ENCODE measurements at regions of chr6 and their contacts with region 1.

Region 1: DNA sequence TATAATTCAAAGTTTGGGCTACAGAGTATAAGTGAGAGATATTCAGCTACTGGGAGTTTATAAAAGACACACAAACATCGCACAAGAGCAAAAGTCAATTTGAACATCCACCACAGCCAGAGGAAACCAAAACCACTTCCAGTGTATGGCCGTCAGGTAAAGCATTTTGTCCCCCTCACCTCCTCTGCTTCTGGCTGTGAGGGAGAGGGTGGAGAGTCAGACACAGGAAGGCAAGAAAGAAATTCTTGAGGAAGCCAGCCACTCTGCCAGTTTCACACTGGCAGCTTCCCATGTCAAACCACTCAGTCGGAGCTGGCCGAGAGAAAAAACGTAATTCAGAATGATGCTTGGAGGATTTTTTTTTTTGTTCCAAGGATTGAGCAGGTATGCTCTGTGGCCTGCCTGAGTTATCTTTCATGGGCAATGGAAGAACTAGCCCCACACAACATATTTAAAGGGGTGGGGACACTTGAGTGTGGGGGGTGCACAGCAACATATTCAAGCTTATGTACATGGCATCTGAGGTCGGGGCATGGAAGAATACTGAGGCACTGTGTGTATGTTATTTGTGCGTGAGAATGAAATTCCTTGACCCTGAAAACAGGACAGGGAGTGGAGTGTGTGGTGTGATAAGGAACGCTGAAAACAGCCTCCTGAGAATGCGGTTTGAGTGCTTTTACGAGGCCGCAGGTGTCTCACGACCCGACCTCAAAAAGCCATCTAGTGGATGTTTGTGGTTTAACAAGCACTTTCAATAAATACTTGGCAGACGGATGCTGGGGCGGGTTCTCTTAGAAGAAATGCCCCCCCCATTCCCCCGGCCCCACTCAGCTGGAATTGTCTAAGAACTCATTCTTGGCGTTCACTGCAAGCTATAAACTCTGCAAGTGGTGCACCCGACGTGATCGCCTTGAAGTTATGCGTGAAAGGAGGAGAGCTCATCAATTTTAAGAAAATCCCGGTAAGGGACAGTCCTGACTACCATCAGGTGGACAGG is 27.5 kb upstream of the ZBTB22 start:
- DNase-seq: peak; percentile 53 to 93 (median 62)
- ATAC-seq: peak; percentile 52
- H3K4me3 ChIP-seq: peak overlapping the region; percentile 24
- H3K4me3 Mint-ChIP-seq: peak overlapping the region; percentile 90
- H3K27ac ChIP-seq: peak overlapping the region; percentile 79 to 88
- H3K27ac Mint-ChIP-seq: peak overlapping the region; percentile 98
- H3K4me1 ChIP-seq: peaks cover 49% of the 10 kb centered on the region
- H3K4me1 Mint-ChIP-seq: peaks cover 38% of the 10 kb centered on the region
- H3K27me3 ChIP-seq: no peaks in the 10 kb centered on the region
- H3K27me3 Mint-ChIP-seq: no peaks in the 10 kb centered on the region
- CTCF ChIP-seq: peak; percentile 64

Region 2: DNA sequence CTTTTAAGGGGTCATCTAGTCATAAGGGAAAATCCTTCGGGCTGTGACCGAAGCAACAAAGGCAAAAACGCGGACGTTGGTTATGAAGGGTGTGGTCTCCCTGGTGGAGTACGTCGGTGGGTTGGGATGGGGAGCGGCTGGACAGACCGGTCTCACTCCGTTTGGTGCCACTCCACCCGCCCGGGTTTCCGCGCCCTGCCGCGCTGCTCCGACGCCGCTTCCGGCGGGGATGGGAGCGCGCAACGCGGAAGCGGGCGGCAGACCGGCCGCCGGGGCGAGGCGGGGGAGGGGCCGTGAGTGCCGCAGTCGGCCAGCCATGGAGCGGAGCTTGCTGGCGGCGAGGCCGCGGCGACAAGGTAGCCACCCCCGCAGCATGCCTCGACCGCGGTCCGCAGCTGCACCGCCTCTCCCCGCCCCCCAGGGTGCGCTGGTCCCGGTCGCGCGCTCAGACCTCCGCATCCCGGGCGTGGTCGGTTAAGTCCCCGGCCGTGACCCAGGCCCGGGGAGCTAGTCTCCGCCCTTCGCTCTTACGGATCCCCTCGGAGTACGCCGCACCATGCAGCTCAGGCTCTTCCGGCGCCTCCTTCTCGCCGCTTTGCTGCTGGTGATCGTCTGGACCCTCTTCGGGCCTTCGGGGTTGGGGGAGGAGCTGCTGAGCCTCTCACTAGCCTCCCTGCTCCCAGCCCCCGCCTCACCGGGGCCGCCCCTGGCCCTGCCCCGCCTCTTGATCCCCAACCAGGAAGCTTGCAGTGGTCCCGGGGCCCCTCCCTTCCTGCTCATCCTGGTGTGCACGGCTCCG is 67.9 kb before region 1 on chr6 and contains the start of gene B3GALT4:
- CTCF ChIA-PET with region 1: interaction called, 16 read pairs
- POLR2A ChIA-PET with region 1: interaction called, 57 read pairs
- intact Hi-C with region 1: no loop called
- DNase-seq: peak in 13 of 14 experiments; percentile 45 to 89 (median 64)
- ATAC-seq: peak; percentile 68
- H3K4me3 ChIP-seq: peak within 1 kb of the TSS; percentile 96
- H3K4me3 Mint-ChIP-seq: peak within 1 kb of the TSS; percentile 93
- H3K27ac ChIP-seq: peak within 1 kb of the TSS; percentile 82 to 90
- H3K27ac Mint-ChIP-seq: peak within 1 kb of the TSS; percentile 97
- H3K4me1 ChIP-seq: peaks cover 83% of the 10 kb centered on the region
- H3K4me1 Mint-ChIP-seq: peaks cover 67% of the 10 kb centered on the region
- H3K27me3 ChIP-seq: no peaks in the 10 kb centered on the region
- H3K27me3 Mint-ChIP-seq: no peaks in the 10 kb centered on the region
- CTCF ChIP-seq: peak; percentile 36
- total RNA-seq, gene B3GALT4: 11.1 to 12.7 TPM

Region 3: GRCh38 chr6:33299237-33299944 is 45.6 kb before region 1 on chr6:
- CTCF ChIA-PET with region 1: interaction called, 17 read pairs
- POLR2A ChIA-PET with region 1: interaction called, 88 read pairs
- intact Hi-C with region 1: loop called (anchors 1 kb)
- DNase-seq: peak; percentile 89 to 97 (median 92)
- ATAC-seq: peak; percentile 84
- H3K4me3 ChIP-seq: peak overlapping the region; percentile 91
- H3K4me3 Mint-ChIP-seq: peak overlapping the region; percentile 98
- H3K27ac ChIP-seq: peak overlapping the region; percentile 90 to 96
- H3K27ac Mint-ChIP-seq: peak overlapping the region; percentile 99
- H3K4me1 ChIP-seq: peaks cover 34% of the 10 kb centered on the region
- H3K4me1 Mint-ChIP-seq: peaks cover 32% of the 10 kb centered on the region
- H3K27me3 ChIP-seq: no peaks in the 10 kb centered on the region
- H3K27me3 Mint-ChIP-seq: no peaks in the 10 kb centered on the region
- CTCF ChIP-seq: peak; percentile 74

Region 4: DNA sequence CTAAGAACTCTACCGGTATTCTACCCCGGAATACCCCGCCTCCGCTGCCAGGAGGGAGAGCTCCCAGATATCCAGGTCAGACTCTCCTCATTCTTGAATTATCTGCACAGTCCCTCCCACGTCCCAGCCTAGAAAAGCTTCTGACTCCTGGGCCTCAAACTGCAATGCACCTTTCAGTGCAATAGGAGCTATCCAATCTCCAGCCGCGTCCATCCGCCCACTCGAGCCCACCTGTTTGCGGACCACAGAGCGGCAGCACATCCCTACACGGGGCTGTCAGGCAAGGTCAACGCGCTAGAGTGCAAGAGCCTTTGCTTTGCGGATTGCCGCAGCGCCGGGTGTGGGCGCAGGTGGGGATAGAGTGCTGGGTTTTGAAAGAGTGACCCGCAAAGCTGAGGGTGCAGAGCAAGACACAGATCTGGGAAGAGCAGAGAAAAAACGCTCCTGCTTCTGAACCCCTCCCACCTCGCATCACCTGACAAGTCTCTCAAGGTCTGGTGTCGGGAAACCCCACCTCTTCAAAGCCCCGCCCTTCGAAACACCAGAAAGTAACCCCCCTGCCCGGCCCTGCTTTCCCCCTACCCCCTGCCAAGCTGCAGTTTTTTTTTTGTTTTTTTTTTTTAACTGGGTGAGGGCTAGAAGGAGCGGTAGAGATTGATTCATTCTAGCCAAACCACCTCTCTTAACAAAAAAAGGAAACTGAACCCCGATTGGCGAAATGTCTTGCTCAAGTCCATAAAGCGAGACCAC is 32.4 kb before region 1 on chr6:
- CTCF ChIA-PET with region 1: interaction called, 32 read pairs
- POLR2A ChIA-PET with region 1: interaction called, 155 read pairs
- intact Hi-C with region 1: loop called (anchors 1 to 5 kb)
- DNase-seq: peak; percentile 75 to 97 (median 82)
- ATAC-seq: peak; percentile 60
- H3K4me3 ChIP-seq: peak overlapping the region; percentile 79
- H3K4me3 Mint-ChIP-seq: peak overlapping the region; percentile 97
- H3K27ac ChIP-seq: peak overlapping the region; percentile 98 to 99
- H3K27ac Mint-ChIP-seq: peak overlapping the region; percentile 94
- H3K4me1 ChIP-seq: peaks cover 70% of the 10 kb centered on the region
- H3K4me1 Mint-ChIP-seq: peaks cover 64% of the 10 kb centered on the region
- H3K27me3 ChIP-seq: no peaks in the 10 kb centered on the region
- H3K27me3 Mint-ChIP-seq: no peaks in the 10 kb centered on the region
- CTCF ChIP-seq: no peak

Region 5: GRCh38 chr6:33323623-33323948 is 21.4 kb before region 1 on chr6:
- CTCF ChIA-PET with region 1: interaction called, 3 read pairs
- POLR2A ChIA-PET with region 1: interaction called, 155 read pairs
- intact Hi-C with region 1: loop called (anchors 1 kb)
- DNase-seq: peak in 1 of 14 experiments; percentile 41
- ATAC-seq: no peak
- H3K4me3 ChIP-seq: peak overlapping the region; percentile 96
- H3K4me3 Mint-ChIP-seq: peak overlapping the region; percentile 100
- H3K27ac ChIP-seq: peak overlapping the region; percentile 77 to 92
- H3K27ac Mint-ChIP-seq: peak overlapping the region; percentile 96
- H3K4me1 ChIP-seq: peaks cover 44% of the 10 kb centered on the region
- H3K4me1 Mint-ChIP-seq: peaks cover 57% of the 10 kb centered on the region
- H3K27me3 ChIP-seq: no peaks in the 10 kb centered on the region
- H3K27me3 Mint-ChIP-seq: no peaks in the 10 kb centered on the region
- CTCF ChIP-seq: no peak

Region 6: GRCh38 chr6:33417903-33418689 is 73.1 kb after region 1 on chr6 and contains the start of gene CUTA:
- CTCF ChIA-PET with region 1: interaction called, 4 read pairs
- POLR2A ChIA-PET with region 1: interaction called, 18 read pairs
- intact Hi-C with region 1: loop called in 1 of 2 experiments (anchors 2 kb)
- DNase-seq: peak; percentile 97 to 100 (median 98)
- ATAC-seq: peak; percentile 85
- H3K4me3 ChIP-seq: peak within 1 kb of the TSS; percentile 82
- H3K4me3 Mint-ChIP-seq: peak within 1 kb of the TSS; percentile 92
- H3K27ac ChIP-seq: peak within 1 kb of the TSS; percentile 97 to 99
- H3K27ac Mint-ChIP-seq: peak within 1 kb of the TSS; percentile 98
- H3K4me1 ChIP-seq: peaks cover 77% of the 10 kb centered on the region
- H3K4me1 Mint-ChIP-seq: peaks cover 79% of the 10 kb centered on the region
- H3K27me3 ChIP-seq: no peaks in the 10 kb centered on the region
- H3K27me3 Mint-ChIP-seq: no peaks in the 10 kb centered on the region
- CTCF ChIP-seq: peak; percentile 30
- total RNA-seq, gene CUTA: 176 to 185 TPM

Measured in CD4-positive, alpha-beta T cell (primary cell).